Testis (tissue), 5 donors: ENCODE measurements at regions of chr15 and their contacts with region 1.

Region 1: GRCh38 chr15:89647191-89647851 is 7.9 kb downstream of the KIF7 start:
- DNase-seq: peak; percentile 89
- H3K4me3 ChIP-seq: peak overlapping the region; percentile 18 to 26
- H3K27ac ChIP-seq: no peak overlapping the region
- H3K4me1 ChIP-seq: no peaks in the 10 kb centered on the region
- H3K27me3 ChIP-seq: no peaks in the 10 kb centered on the region
- CTCF ChIP-seq: peak; percentile 66 to 79 (median 70)
- POLR2A ChIP-seq: no peak

Region 2: GRCh38 chr15:89732451-89733172 is 85.3 kb after region 1 on chr15:
- intact Hi-C with region 1: loop called (anchors 10 kb)
- DNase-seq: no peak
- H3K4me3 ChIP-seq: no peak overlapping the region
- H3K27ac ChIP-seq: no peak overlapping the region
- H3K4me1 ChIP-seq: no peaks in the 10 kb centered on the region
- H3K27me3 ChIP-seq: no peaks in the 10 kb centered on the region
- CTCF ChIP-seq: no peak
- POLR2A ChIP-seq: no peak